Activated CD4-positive, alpha-beta T cell treated with anti-CD3 and anti-CD28 coated beads for 36 hours (primary cell): ENCODE measurements at regions of chr6 and their contacts with region 1.

Region 1: GRCh38 chr6:79824202-79824601 is 123.2 kb downstream of the ELOVL4 start:
- DNase-seq: no peak
- ATAC-seq: no peak
- H3K4me3 Mint-ChIP-seq: no peak overlapping the region
- H3K27ac Mint-ChIP-seq: no peak overlapping the region
- H3K4me1 Mint-ChIP-seq: no peaks in the 10 kb centered on the region
- H3K27me3 Mint-ChIP-seq: peaks cover 18% of the 10 kb centered on the region

Region 2: GRCh38 chr6:79413562-79414002 is 410.6 kb before region 1 on chr6:
- CTCF ChIA-PET with region 1: no interaction called
- POLR2A ChIA-PET with region 1: no interaction called
- intact Hi-C with region 1: no loop called
- DNase-seq: no peak
- ATAC-seq: no peak
- H3K4me3 Mint-ChIP-seq: no peak overlapping the region
- H3K27ac Mint-ChIP-seq: no peak overlapping the region
- H3K4me1 Mint-ChIP-seq: no peaks in the 10 kb centered on the region
- H3K27me3 Mint-ChIP-seq: no peaks in the 10 kb centered on the region

Region 3: DNA sequence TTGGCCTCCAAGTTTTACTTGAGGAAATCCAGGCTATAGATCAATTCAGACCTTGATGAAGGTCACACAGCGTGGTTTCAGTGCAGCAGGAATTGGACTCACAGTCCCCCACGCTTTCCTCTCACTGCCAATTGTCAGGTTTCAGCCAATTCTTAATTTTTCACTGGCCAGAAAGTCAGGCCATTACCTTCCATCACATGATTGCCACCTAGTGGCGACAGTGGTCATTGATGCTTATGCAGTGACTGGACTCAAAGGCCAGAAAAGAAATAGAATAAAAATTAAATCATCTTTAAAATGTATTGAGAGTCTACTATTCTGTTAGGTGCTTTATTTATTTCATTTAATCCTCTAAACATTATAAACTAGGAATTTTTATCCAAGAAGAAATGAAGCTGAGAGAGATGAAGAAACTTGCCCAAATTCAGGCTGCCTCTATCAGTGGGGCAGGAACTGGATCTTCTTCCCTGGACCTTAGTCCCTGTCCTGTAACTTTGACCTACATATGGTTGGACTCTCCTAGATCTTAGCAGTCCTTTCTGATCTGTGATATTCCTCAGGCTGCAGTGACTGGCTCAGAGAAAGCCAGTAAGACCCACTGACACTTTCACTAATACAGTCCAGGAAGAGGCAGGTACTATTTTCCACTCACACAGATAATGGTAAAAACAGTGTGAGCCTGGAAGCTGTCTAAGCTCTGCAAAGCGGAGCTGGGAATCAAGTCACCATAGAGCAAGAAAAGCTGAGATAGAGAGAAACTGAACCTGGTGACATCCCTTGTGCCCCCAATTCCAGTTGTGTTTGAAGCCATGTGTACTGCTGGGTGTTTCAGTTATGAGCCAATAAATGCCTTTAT is 10.1 kb before region 1 on chr6:
- CTCF ChIA-PET with region 1: interaction called, 11 read pairs
- POLR2A ChIA-PET with region 1: no interaction called
- intact Hi-C with region 1: no loop called
- DNase-seq: peak; percentile 81
- ATAC-seq: peak; percentile 71
- H3K4me3 Mint-ChIP-seq: no peak overlapping the region
- H3K27ac Mint-ChIP-seq: no peak overlapping the region
- H3K4me1 Mint-ChIP-seq: no peaks in the 10 kb centered on the region
- H3K27me3 Mint-ChIP-seq: peaks cover 2% of the 10 kb centered on the region

Region 4: DNA sequence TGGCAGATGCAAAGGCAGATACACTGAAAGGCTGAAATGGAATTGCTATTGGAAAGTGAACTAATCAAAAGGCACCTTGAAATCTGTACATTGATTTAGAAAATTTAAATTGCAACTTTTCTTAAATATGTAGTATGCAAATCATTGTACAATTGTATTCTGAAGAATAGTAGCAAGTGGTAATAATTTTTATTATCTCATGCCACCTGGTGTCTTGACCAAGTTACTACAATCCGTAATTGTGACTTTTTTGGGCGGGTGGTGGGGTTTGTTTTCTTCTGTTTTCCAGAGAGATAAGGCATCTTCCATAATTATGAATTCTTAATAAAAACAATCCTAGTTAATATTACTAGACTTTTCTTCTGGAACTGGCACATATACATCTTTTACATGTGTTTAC is 269.8 kb after region 1 on chr6:
- CTCF ChIA-PET with region 1: no interaction called
- POLR2A ChIA-PET with region 1: no interaction called
- intact Hi-C with region 1: no loop called
- DNase-seq: peak; percentile 23
- ATAC-seq: no peak
- H3K4me3 Mint-ChIP-seq: no peak overlapping the region
- H3K27ac Mint-ChIP-seq: no peak overlapping the region
- H3K4me1 Mint-ChIP-seq: peaks cover 2% of the 10 kb centered on the region
- H3K27me3 Mint-ChIP-seq: peaks cover 2% of the 10 kb centered on the region